Adrenal gland (tissue), 19 donors: ENCODE measurements at regions of chr14 and their contacts with region 1.

Region 1: DNA sequence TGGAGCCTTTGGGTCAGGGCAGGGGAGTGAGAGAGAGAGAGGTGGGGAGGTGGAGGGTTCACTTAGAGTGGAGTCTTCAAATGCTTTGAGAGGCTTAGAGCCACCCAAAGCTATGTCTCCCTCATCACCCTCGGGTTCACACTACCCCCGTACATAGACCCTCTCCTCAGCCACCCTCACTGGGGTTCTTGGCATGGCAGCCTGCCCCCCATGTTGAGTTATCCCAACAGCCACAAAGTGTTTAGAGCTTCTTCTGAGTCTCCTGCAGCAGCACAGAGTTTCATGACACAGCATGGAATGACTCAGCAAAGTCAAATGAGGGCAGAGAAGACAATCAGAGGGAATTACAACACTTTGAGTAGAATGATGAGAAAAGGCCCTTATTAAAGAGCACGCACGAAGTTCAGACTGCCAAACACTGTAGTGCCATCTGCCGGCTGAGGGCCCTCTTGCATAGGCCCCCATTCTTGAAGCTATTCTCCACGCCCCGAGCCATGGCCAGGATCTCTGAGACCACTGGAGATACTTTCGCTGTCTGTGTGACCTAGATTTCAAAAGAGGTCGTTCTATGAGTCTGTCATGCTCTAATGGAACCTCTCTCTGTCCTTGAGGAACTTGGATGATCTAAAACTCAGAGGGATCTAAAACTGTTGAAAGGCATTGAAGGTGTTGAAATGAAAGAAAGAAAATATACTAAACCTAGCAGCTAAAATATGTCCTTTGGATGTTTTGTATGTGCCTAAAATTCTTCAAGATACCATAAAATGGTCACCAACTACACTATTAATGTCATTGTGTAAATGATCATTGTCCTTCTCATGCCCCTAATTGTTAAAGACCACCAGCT is 221.9 kb downstream of the PELI2 start:
- DNase-seq: peak; percentile 80 to 94 (median 85)
- H3K4me3 ChIP-seq: no peak overlapping the region
- H3K27ac ChIP-seq: peak overlapping the region in 3 of 5 donors; percentile 15 to 43 (median 37)
- H3K4me1 ChIP-seq: peaks cover 9 to 20% of the 10 kb centered on the region in 2 donors
- H3K27me3 ChIP-seq: no peaks in the 10 kb centered on the region
- CTCF ChIP-seq: peak; percentile 76 to 95 (median 92)
- POLR2A ChIP-seq: no peak

Region 2: GRCh38 chr14:55707365-55707804 is 632.7 kb before region 1 on chr14:
- intact Hi-C with region 1: loop called in 1 of 2 experiments (anchors 10 kb)
- DNase-seq: no peak
- H3K4me3 ChIP-seq: no peak overlapping the region
- H3K27ac ChIP-seq: no peak overlapping the region
- H3K4me1 ChIP-seq: no peaks in the 10 kb centered on the region
- H3K27me3 ChIP-seq: no peaks in the 10 kb centered on the region
- CTCF ChIP-seq: peak; percentile 33 to 78 (median 68)
- POLR2A ChIP-seq: no peak

Region 3: GRCh38 chr14:55846826-55847446 is 493.1 kb before region 1 on chr14:
- intact Hi-C with region 1: loop called in 1 of 2 experiments (anchors 10 kb)
- DNase-seq: peak in 6 of 7 donors; percentile 24 to 82 (median 52)
- H3K4me3 ChIP-seq: no peak overlapping the region
- H3K27ac ChIP-seq: peak overlapping the region in 1 of 5 donors; percentile 34
- H3K4me1 ChIP-seq: peaks cover 0 to 12% of the 10 kb centered on the region in 2 donors
- H3K27me3 ChIP-seq: no peaks in the 10 kb centered on the region
- CTCF ChIP-seq: no peak
- POLR2A ChIP-seq: no peak

Region 4: GRCh38 chr14:56120091-56120691 is 219.9 kb before region 1 on chr14:
- intact Hi-C with region 1: loop called (anchors 5 to 10 kb)
- DNase-seq: no peak
- H3K4me3 ChIP-seq: peak overlapping the region in 1 of 4 donors; percentile 96
- H3K27ac ChIP-seq: peak overlapping the region in 2 of 5 donors; percentile 18 to 87
- H3K4me1 ChIP-seq: peaks cover 0 to 26% of the 10 kb centered on the region in 2 donors
- H3K27me3 ChIP-seq: no peaks in the 10 kb centered on the region
- CTCF ChIP-seq: peak in 3 of 6 experiments; percentile 9 to 21 (median 14)
- POLR2A ChIP-seq: no peak

Region 5: DNA sequence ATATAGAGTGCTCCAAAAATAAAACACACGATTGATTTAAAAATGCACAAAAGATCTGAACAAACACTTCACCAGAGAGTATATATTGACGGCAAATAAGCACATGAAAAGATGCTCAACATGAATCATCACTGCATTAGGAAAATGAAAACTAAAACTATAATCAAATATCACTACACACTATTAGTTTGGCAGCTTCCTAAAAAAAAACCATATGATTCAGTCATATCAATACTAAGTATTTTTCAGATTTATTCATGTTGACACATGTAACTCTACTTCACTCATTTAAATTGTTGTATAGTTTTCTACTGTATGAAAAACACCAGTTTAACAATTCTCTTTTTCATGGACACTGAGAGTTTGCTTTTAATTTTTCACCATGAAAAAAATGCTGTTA is 887.0 kb after region 1 on chr14:
- intact Hi-C with region 1: no loop called
- DNase-seq: no peak
- H3K4me3 ChIP-seq: no peak overlapping the region
- H3K27ac ChIP-seq: no peak overlapping the region
- H3K4me1 ChIP-seq: no peaks in the 10 kb centered on the region
- H3K27me3 ChIP-seq: no peaks in the 10 kb centered on the region
- CTCF ChIP-seq: no peak
- POLR2A ChIP-seq: no peak